ENCODE measurements at regions of chr18 and their contacts with region 1.

Region 1: GRCh38 chr18:57705826-57706554 is 84.4 kb upstream of the NARS1 start:
- DNase-seq: no peak
- ATAC-seq: no peak
- H3K4me3 ChIP-seq: no peak overlapping the region
- H3K4me3 Mint-ChIP-seq: no peak overlapping the region
- H3K27ac ChIP-seq: no peak overlapping the region
- H3K27ac Mint-ChIP-seq: no peak overlapping the region
- H3K4me1 ChIP-seq: no peaks in the 10 kb centered on the region
- H3K4me1 Mint-ChIP-seq: peaks cover 40% of the 10 kb centered on the region
- H3K27me3 ChIP-seq: no peaks in the 10 kb centered on the region
- H3K27me3 Mint-ChIP-seq: no peaks in the 10 kb centered on the region
- CTCF ChIP-seq: no peak

Region 2: GRCh38 chr18:57649556-57650500 is 56.2 kb before region 1 on chr18:
- CTCF ChIA-PET with region 1: no interaction called
- POLR2A ChIA-PET with region 1: no interaction called
- intact Hi-C with region 1: loop called (anchors 10 kb)
- DNase-seq: peak; percentile 19
- ATAC-seq: peak; percentile 69
- H3K4me3 ChIP-seq: no peak overlapping the region
- H3K4me3 Mint-ChIP-seq: no peak overlapping the region
- H3K27ac ChIP-seq: no peak overlapping the region
- H3K27ac Mint-ChIP-seq: peak overlapping the region; percentile 80
- H3K4me1 ChIP-seq: peaks cover 11 to 13% of the 10 kb centered on the region in 2 donors
- H3K4me1 Mint-ChIP-seq: peaks cover 44% of the 10 kb centered on the region
- H3K27me3 ChIP-seq: no peaks in the 10 kb centered on the region
- H3K27me3 Mint-ChIP-seq: no peaks in the 10 kb centered on the region
- CTCF ChIP-seq: no peak

Measured in B cell (primary cell).